HEK293 (cell line): ENCODE measurements at regions of chr9 and their contacts with region 1.

Region 1: GRCh38 chr9:34665381-34666250 is 3.2 kb upstream of the CCL27 start:
- H3K4me3 ChIP-seq: peak overlapping the region; percentile 74
- H3K27ac ChIP-seq: peak overlapping the region; percentile 87
- H3K4me1 ChIP-seq: peaks cover 5% of the 10 kb centered on the region; the same call in 1 of the 2 replicates
- CTCF ChIP-seq: no peak; the same call in 1 of the 2 replicates

Region 2: GRCh38 chr9:34591248-34591916 is 74.2 kb before region 1 on chr9:
- CTCF ChIA-PET with region 1: no interaction called
- POLR2A ChIA-PET with region 1: no interaction called
- H3K4me3 ChIP-seq: no peak overlapping the region
- H3K27ac ChIP-seq: no peak overlapping the region
- H3K4me1 ChIP-seq: no peaks in the 10 kb centered on the region
- CTCF ChIP-seq: peak; percentile 90

Region 3: DNA sequence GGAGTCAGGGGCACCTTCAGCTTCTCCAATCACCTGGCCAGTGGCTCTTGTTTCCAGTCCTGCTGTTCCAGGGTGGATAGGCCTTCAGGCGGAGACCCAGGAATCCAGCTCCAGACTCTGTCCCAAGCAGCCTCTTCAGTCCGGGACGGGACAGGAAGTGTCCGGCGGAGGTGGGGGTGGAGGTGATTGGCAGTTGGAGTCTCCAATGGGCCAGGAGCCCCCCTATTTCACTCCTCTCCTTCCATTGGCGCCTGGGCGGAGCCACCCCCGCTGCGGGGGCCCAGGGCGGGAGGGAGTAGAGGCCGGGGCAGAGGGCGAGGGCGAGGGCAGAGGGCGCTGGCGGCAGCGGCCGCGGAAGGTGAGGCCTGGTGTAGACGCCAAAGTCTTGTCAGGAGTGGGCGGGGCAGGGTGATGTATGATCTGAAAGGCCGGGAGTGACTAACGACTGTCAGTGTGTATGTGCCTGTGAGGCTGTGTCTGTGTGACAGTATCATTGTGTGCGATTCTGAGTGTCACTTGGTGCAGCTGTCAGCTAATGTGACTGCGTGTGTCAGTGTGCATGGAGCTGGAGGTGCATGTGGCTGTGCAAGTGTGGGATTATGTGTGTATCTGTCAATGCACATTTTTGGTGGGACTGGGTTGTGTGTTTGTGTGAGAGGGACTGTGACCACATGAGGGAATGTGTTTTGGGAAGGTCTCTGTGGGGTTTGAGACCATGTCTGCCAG is 13.6 kb before region 1 on chr9 and contains the start of gene IL11RA:
- CTCF ChIA-PET with region 1: interaction called, 17 read pairs
- POLR2A ChIA-PET with region 1: interaction called, 14 read pairs
- H3K4me3 ChIP-seq: peak within 1 kb of the TSS; percentile 34
- H3K27ac ChIP-seq: peak within 1 kb of the TSS; percentile 29; the same call in 1 of the 2 replicates
- H3K4me1 ChIP-seq: peaks cover 6% of the 10 kb centered on the region
- CTCF ChIP-seq: no peak